Heart left ventricle (tissue), 16 donors: ENCODE measurements at regions of chr17 and their contacts with region 1.

Region 1: DNA sequence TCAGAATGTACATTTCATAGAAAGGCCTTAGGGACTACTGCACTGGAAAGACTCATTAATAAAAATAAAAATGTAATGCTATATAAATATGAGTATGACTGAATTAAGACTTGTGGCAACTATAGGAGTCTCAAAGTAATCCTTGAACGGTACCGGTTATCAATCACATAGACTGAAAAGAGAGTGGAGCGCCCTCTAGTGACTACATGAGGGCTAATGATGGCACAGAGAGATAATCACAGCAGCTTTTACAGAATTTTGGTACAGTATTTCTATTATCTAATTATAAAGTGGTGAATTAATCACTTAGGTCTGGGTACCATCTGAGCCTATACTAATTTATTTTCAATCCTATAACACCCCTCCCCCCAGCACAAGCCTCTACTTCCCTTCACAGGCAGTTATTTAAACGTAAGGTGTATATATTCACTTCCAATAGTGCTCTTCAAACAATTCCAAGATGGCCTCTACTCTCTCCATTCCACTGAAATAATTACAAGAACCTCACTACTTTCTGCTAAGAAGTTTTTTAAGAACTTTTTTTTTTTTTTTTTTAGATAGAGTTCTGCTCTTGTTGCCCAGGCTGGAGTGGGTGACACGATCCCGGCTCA is 40.7 kb upstream of the ANKFY1 start:
- DNase-seq: peak in 3 of 5 donors; percentile 21 to 33 (median 32)
- ATAC-seq: peak in 2 of 4 donors; percentile 54 to 70
- H3K4me3 ChIP-seq: no peak overlapping the region
- H3K27ac ChIP-seq: no peak overlapping the region
- H3K4me1 ChIP-seq: peaks cover 0 to 35% (median 13%) of the 10 kb centered on the region in 12 donors
- H3K27me3 ChIP-seq: no peaks in the 10 kb centered on the region
- CTCF ChIP-seq: peak; percentile 53 to 89 (median 75)
- POLR2A ChIP-seq: no peak

Region 2: DNA sequence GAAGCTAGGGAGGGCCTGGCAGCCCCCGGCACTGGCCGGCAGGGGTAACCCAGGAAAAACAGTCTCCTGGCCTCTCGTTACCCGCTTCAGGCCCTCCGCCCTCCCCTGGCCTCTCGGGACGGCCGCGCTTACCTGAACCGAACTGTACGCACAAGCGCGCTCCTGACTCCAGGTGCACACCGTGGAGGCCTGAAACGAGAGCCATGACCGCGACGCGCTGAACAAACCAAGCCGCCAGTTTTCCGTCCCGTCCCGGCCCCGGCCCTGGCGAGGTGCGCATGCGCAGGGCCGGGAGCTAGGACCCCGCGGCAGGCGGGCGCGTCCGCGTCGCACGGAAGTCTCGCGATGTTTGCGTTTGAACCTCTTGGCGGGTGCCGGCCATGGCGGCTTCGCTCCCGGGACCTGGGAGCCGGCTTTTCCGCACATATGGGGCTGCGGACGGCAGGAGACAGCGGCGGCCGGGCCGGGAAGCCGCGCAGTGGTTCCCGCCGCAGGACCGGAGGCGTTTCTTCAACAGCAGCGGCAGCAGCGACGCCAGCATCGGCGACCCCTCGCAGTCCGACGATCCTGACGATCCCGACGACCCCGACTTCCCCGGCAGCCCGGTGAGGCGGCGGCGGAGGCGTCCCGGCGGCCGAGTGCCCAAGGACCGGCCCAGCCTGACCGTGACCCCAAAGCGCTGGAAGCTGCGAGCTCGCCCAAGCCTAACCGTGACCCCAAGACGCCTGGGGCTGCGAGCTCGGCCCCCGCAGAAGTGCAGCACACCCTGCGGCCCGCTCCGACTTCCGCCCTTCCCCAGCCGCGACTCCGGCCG is 580.8 kb before region 1 on chr17 and contains the start of gene HASPIN:
- intact Hi-C with region 1: no loop called
- DNase-seq: peak; percentile 91 to 98 (median 93)
- ATAC-seq: peak; percentile 83 to 96 (median 96)
- H3K4me3 ChIP-seq: peak within 1 kb of the TSS; percentile 65 to 94 (median 78)
- H3K27ac ChIP-seq: peak within 1 kb of the TSS; percentile 52 to 91 (median 88)
- H3K4me1 ChIP-seq: peaks cover 6 to 47% (median 19%) of the 10 kb centered on the region in 12 donors
- H3K27me3 ChIP-seq: no peaks in the 10 kb centered on the region
- CTCF ChIP-seq: peak in 4 of 12 donors; percentile 25 to 41 (median 28)
- POLR2A ChIP-seq: peak in 1 of 2 donors; percentile 67
- total RNA-seq, gene HASPIN: 0.15 to 2.1 (median 0.32) TPM

Region 3: GRCh38 chr17:4229627-4230541 is 74.6 kb before region 1 on chr17:
- intact Hi-C with region 1: loop called in 1 of 10 experiments (anchors 5 kb)
- DNase-seq: peak in 4 of 5 donors; percentile 40 to 64 (median 53)
- ATAC-seq: peak; percentile 88 to 95 (median 90)
- H3K4me3 ChIP-seq: peak overlapping the region in 4 of 12 donors; percentile 0 to 18 (median 10)
- H3K27ac ChIP-seq: peak overlapping the region; percentile 57 to 88 (median 79)
- H3K4me1 ChIP-seq: peaks cover 0 to 56% (median 36%) of the 10 kb centered on the region in 12 donors
- H3K27me3 ChIP-seq: no peaks in the 10 kb centered on the region
- CTCF ChIP-seq: no peak
- POLR2A ChIP-seq: no peak

Region 4: GRCh38 chr17:4354862-4355514 is 50.5 kb after region 1 on chr17:
- intact Hi-C with region 1: loop called in 2 of 10 experiments (anchors 5 to 10 kb)
- DNase-seq: no peak
- ATAC-seq: no peak
- H3K4me3 ChIP-seq: no peak overlapping the region
- H3K27ac ChIP-seq: no peak overlapping the region
- H3K4me1 ChIP-seq: peaks cover 0 to 64% (median 41%) of the 10 kb centered on the region in 12 donors
- H3K27me3 ChIP-seq: no peaks in the 10 kb centered on the region
- CTCF ChIP-seq: no peak
- POLR2A ChIP-seq: no peak

Region 5: DNA sequence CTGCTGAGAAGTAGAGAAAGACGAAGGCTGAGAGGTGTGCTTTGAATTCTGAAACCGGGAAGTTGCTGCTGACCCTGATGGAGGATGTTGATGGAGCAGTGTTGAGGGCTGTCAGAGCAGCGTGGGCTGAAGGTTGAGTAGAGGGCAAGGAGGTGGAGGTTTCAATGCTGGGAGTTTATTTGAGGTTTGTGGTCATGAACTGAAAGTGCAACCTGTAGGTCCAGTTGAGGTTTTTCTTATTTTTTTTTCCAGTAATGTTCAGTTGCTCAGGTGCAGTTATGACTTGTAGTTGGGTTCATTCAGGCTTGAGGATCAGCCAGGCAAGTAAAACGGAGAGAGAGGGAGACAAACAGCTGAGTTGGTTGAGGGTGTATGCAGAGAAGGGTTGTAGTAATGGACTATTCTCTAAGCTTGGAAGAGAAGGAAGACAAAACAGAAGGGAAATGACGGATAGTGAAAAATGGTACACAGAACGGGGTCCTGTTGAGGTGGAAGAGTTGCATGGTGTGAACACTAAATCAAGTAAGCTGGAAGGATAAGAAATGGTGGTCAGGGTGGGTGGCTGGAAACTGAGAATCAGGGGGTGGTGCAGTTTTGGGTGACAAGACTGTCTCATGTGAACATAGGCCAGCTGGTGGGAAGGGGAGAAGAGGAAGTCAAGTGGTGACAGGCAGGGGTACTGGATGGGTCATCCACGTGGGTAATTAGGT is 70.7 kb after region 1 on chr17:
- intact Hi-C with region 1: no loop called
- DNase-seq: peak in 1 of 5 donors; percentile 10
- ATAC-seq: no peak
- H3K4me3 ChIP-seq: no peak overlapping the region
- H3K27ac ChIP-seq: no peak overlapping the region
- H3K4me1 ChIP-seq: no peaks in the 10 kb centered on the region
- H3K27me3 ChIP-seq: no peaks in the 10 kb centered on the region
- CTCF ChIP-seq: no peak
- POLR2A ChIP-seq: no peak

Region 6: GRCh38 chr17:4412933-4413831 is 108.7 kb after region 1 on chr17:
- intact Hi-C with region 1: loop called in 1 of 10 experiments (anchors 5 kb)
- DNase-seq: peak; percentile 90 to 95 (median 92)
- ATAC-seq: peak; percentile 93 to 98 (median 98)
- H3K4me3 ChIP-seq: peak overlapping the region in 1 of 12 donors; percentile 23
- H3K27ac ChIP-seq: no peak overlapping the region
- H3K4me1 ChIP-seq: peaks cover 0 to 8% (median 0%) of the 10 kb centered on the region in 12 donors
- H3K27me3 ChIP-seq: no peaks in the 10 kb centered on the region
- CTCF ChIP-seq: peak; percentile 83 to 96 (median 88)
- POLR2A ChIP-seq: no peak